ENCODE measurements at regions of chr9 and their contacts with region 1.

Region 1: GRCh38 chr9:125150349-125151245 is 7.3 kb upstream of the SCAI start:
- DNase-seq: no peak
- ATAC-seq: no peak
- H3K4me3 ChIP-seq: no peak overlapping the region
- H3K27ac ChIP-seq: no peak overlapping the region
- H3K4me1 ChIP-seq: peaks cover 4 to 18% of the 10 kb centered on the region in 2 donors
- H3K27me3 ChIP-seq: no peaks in the 10 kb centered on the region
- CTCF ChIP-seq: no peak

Region 2: DNA sequence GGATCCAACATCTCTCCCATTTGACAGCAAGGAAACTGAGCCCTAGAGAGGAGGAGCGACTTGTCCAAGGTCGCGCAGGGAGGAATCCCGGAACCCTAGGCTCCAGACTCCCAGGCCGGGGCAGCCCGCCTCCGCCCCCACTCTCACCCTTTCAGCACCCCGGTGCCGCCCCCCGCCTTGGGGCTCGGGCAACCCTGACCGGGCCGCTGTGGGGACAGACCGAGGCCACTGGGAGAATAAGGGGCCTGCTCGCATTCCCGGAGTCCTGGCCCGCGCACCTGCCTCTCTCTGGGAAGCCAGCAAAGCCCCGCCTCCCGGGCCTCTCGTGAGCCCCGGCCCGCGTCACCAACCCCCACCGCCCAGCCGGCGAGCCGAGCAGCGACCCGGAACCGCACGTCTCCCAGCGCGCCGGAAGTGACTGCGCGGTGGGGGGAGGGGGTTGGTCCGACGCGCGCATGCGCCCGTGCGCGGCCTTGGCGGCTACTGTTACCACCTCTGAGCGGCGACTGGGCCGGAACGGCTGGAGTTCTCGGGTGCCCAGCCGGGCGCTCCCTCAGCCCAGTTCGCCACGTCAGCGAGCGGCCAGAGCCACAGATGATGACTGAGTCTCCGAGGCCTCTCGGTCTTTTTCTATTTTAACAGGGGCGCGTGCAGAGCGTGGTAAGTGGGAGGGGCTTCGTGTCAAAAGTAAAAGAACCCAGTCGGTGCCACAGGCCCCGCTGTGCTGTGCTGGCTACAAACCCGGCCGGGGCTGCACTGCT is 209.7 kb before region 1 on chr9 and contains the start of gene GOLGA1:
- intact Hi-C with region 1: loop called in 1 of 2 experiments (anchors 10 kb)
- DNase-seq: peak; percentile 93 to 99 (median 96)
- ATAC-seq: peak; percentile 95
- H3K4me3 ChIP-seq: peak within 1 kb of the TSS; percentile 78 to 89
- H3K27ac ChIP-seq: peak within 1 kb of the TSS; percentile 94 to 99
- H3K4me1 ChIP-seq: peaks cover 0 to 23% of the 10 kb centered on the region in 2 donors
- H3K27me3 ChIP-seq: no peaks in the 10 kb centered on the region
- CTCF ChIP-seq: no peak
- polyA plus RNA-seq, gene GOLGA1: 18.1 to 20.2 (median 18.9) TPM

Region 3: GRCh38 chr9:125297917-125298316 is 147.3 kb after region 1 on chr9:
- intact Hi-C with region 1: no loop called
- DNase-seq: no peak
- ATAC-seq: no peak
- H3K4me3 ChIP-seq: no peak overlapping the region
- H3K27ac ChIP-seq: peak overlapping the region in 1 of 2 donors; percentile 28
- H3K4me1 ChIP-seq: peaks cover 0 to 30% of the 10 kb centered on the region in 2 donors
- H3K27me3 ChIP-seq: no peaks in the 10 kb centered on the region
- CTCF ChIP-seq: no peak